Heart left ventricle (tissue), 16 donors: ENCODE measurements at regions of chr5 and their contacts with region 1.

Region 1: DNA sequence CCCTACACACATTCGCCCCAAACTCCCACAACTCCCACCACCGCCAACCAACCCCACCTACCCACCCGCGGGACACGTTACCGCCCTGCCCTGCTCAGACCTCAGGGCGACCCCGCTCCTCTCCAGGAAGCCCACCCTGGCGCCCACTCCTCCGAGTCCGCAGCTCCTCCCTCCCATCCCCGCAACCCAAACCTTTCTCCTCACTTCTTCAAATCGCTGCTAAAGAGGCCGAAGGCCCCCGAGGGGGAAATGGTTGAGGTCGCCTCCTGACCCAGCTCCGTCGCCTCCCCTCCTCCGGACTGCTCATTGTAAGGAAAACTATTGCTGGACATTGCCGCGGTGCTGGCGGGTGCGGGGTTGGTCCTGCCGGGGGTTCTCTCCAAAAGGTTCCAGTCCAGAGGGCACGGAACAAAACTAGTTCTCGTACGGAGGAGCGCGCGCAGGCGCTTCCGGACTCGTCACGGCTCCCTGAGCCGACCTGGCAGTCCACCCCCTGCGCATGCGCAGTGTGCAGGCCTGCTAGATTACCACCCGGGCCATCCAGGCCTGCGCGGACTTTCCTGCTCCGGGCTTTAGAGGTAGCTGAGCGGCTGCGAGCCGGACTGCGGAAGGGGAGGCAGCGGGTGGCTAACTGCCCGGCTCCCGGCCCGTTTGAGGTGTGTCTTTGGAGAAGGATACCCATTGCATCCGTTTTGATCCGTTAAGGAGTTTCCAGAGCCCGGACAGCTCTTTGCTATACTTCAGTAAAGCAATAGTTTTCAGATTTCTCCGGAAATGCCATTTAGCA is at the start of gene AP3B1:
- DNase-seq: peak; percentile 99 to 100 (median 99)
- ATAC-seq: peak; percentile 96 to 98 (median 98)
- H3K4me3 ChIP-seq: peak within 1 kb of the TSS; percentile 60 to 97 (median 88)
- H3K27ac ChIP-seq: peak within 1 kb of the TSS; percentile 64 to 94 (median 90)
- H3K4me1 ChIP-seq: peaks cover 0 to 38% (median 22%) of the 10 kb centered on the region in 12 donors
- H3K27me3 ChIP-seq: no peaks in the 10 kb centered on the region
- CTCF ChIP-seq: no peak
- POLR2A ChIP-seq: peak; percentile 32 to 88
- total RNA-seq, gene AP3B1: 19.3 to 33.7 (median 25.2) TPM

Region 2: DNA sequence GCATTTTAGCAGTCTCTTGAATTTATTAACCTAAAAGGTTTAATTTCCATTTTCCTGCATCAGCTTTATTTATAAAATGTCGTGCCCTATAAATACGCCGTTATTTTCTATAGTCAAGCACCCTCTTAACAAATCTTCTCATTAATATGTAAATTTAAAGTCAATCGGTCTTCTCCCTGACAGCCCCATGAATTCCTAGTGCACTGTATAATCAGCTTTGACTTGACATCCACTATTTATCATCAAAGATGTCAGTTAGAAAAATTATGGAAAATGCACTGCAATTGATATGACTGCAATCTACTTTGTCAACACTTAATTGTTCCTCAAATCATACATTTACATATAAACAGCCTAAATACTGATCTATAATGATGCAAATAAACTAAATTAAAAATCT is 83.4 kb before region 1 on chr5:
- intact Hi-C with region 1: no loop called
- DNase-seq: no peak
- ATAC-seq: no peak
- H3K4me3 ChIP-seq: no peak overlapping the region
- H3K27ac ChIP-seq: no peak overlapping the region
- H3K4me1 ChIP-seq: no peaks in the 10 kb centered on the region
- H3K27me3 ChIP-seq: no peaks in the 10 kb centered on the region
- CTCF ChIP-seq: no peak
- POLR2A ChIP-seq: no peak

Region 3: DNA sequence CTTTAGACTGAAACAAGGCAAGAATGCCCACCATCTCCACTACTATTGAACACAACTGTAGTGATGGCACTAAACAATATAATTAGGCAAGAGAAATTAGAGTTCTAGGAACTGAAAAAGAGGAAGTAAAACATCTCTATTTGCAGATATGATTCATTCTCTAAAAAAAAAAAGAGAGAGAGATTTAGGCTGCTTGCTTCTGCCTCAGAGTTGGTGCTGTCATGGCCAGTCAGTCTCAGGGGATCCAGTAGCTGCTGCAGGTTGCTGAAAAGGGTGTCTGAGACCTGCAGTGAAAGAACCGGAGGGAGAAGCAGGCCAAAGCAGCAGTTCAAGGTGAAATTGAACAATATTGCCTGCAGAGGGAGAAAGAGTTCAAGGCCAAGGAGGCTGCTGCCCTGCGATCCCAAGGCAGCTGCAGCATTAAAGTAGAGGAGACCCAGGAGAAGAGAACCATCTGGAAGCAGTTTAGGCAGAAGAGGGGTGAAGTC is 72.4 kb before region 1 on chr5:
- intact Hi-C with region 1: no loop called
- DNase-seq: no peak
- ATAC-seq: no peak
- H3K4me3 ChIP-seq: no peak overlapping the region
- H3K27ac ChIP-seq: no peak overlapping the region
- H3K4me1 ChIP-seq: peaks cover 0 to 8% (median 0%) of the 10 kb centered on the region in 12 donors
- H3K27me3 ChIP-seq: no peaks in the 10 kb centered on the region
- CTCF ChIP-seq: peak in 1 of 12 donors; percentile 7
- POLR2A ChIP-seq: no peak

Region 4: GRCh38 chr5:78359831-78360673 is 65.6 kb after region 1 on chr5 and contains the start of gene SCAMP1:
- intact Hi-C with region 1: loop called (anchors 1 to 5 kb)
- DNase-seq: peak; percentile 92 to 96 (median 93)
- ATAC-seq: peak; percentile 92 to 98 (median 98)
- H3K4me3 ChIP-seq: peak within 1 kb of the TSS; percentile 76 to 97 (median 89)
- H3K27ac ChIP-seq: peak within 1 kb of the TSS; percentile 69 to 95 (median 92)
- H3K4me1 ChIP-seq: peaks cover 0 to 29% (median 24%) of the 10 kb centered on the region in 12 donors
- H3K27me3 ChIP-seq: no peaks in the 10 kb centered on the region
- CTCF ChIP-seq: peak; percentile 14 to 67 (median 51)
- POLR2A ChIP-seq: peak in 1 of 2 donors; percentile 67
- total RNA-seq, gene SCAMP1: 18.9 to 40.6 (median 37.6) TPM

Region 5: DNA sequence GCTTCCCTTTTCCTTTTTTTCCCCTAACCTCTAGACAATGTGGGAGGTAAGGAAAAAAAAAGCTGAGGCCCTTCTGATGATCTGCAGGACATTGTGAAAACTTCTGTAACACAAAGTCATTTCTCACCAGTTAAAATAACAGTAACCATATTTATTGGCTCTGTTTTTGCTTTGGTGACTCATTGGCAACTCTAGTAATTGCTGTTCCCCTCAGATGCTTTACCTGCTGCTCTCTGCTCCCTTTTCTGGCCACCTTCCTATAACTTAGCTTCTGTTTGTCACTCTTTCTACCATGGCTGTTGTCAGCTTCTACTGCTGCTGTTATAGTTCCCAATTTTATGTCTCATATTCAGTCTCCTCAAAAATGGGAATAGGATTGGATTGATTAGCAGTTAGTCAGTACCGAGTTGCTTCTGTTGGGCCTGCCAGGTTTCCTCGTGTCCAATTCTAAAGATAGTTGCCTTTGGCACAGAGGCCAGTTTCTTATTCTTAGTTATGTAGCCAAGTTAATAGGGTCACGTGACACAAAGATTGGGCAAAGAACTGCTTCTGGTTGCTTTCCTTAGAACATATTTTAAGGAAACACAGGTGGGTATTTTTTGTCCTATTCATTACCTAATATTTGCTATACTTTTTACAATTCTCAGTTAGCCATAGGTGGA is 82.7 kb after region 1 on chr5:
- intact Hi-C with region 1: loop called in 1 of 10 experiments (anchors 5 kb)
- DNase-seq: peak in 2 of 5 donors; percentile 29 to 30
- ATAC-seq: peak; percentile 37 to 87 (median 66)
- H3K4me3 ChIP-seq: no peak overlapping the region
- H3K27ac ChIP-seq: peak overlapping the region in 7 of 12 donors; percentile 8 to 49 (median 32)
- H3K4me1 ChIP-seq: peaks cover 3 to 30% (median 19%) of the 10 kb centered on the region in 12 donors
- H3K27me3 ChIP-seq: no peaks in the 10 kb centered on the region
- CTCF ChIP-seq: no peak
- POLR2A ChIP-seq: no peak

Region 6: DNA sequence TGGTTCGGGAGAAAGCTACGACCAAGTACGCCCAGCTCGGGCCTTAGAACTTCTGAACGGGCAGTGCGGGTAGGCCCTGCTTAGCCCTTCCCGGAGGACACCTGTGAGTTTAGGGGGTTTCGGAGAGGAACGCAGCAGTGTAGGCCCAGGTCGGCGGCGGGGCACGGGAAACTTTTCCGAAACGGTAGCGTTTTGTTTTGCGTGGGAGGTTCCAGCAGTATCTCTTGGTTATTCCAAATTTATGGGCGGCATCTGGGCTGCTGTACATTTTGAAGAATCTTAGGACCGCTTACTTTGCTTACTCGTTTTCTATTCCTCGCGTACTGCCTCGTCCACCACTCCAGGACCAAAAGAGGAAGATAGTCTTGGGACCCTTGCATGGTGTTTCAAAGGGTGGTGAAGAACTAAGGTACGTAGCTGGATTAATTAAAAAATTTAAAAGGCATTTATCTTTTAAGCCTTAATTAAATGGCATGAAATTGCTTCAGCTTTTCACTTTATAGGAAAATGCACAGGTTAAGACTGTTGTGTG is 1318.3 kb after region 1 on chr5:
- intact Hi-C with region 1: loop called in 1 of 10 experiments (anchors 10 kb)
- DNase-seq: no peak
- ATAC-seq: peak in 3 of 4 donors; percentile 6 to 16 (median 14)
- H3K4me3 ChIP-seq: peak overlapping the region; percentile 58 to 95 (median 90)
- H3K27ac ChIP-seq: peak overlapping the region; percentile 82 to 96 (median 92)
- H3K4me1 ChIP-seq: peaks cover 0 to 54% (median 20%) of the 10 kb centered on the region in 12 donors
- H3K27me3 ChIP-seq: no peaks in the 10 kb centered on the region
- CTCF ChIP-seq: no peak
- POLR2A ChIP-seq: no peak